A673 (cell line): ENCODE measurements at regions of chr13 and their contacts with region 1.

Region 1: DNA sequence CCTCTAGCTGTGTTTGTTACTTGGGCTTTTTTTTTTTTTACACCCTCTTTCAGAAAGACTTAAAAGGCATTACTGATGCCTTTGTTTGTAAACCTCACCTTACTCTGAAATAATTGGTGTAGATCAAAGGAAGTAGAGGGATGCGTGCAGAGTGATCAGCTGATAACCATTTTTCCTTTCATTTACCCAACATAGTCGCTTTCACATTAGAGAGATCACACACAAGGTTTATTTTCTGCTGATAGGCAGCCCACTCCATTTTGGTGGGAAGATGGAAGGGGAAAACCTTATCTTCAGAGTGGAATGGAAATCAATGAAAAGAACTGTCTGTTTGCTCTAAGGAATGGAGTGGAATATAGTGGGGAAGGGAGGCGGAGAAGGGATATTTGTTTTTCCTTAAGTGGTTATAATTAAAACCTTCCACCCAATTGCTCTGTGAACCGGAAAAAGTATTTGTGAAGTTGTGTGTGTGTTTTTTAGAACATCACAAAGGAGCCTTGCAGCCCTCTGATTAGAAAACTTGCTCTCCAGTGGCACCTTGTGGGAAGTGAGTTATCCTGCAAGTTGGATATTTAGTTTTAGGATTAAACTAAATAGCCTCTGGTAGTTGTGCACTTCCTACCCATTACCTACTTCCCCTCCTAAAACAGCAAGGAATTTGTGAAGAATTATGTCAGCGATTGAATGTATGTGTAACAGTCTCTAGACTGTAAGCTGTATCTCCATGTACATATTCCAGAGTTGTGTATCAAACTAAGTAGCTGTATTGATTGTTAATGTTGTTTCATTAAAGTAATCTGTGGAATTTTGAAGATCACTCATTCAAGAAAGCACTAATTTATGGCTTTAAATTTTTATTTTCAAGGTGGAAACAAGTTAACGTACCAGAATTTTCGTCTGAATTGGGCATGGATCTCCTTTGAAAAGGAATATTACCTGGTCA is 76.8 kb downstream of the FREM2 start:
- DNase-seq: peak; percentile 87
- H3K4me3 ChIP-seq: no peak overlapping the region
- H3K27ac ChIP-seq: no peak overlapping the region
- H3K4me1 ChIP-seq: peaks cover 4% of the 10 kb centered on the region
- H3K27me3 ChIP-seq: peaks cover 2% of the 10 kb centered on the region
- CTCF ChIP-seq: peak; percentile 92

Region 2: DNA sequence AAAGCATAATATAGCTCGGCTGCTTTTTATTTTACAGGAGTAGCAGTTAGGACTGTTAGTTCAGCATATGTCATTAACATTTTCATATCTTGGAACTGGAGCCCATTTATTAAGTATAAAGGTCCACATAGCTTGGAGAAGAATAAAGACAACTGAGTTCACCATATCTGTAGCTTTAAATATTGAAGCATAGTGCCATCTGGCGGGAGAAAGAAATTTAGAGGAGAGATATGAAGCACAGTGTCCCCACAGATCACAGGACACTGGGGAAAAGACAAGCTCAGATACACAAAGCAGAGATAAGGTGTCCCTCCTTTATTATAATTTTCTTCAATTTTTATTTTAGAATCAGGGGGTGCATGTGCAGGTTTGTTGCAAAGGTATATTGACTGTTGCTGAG is 181.6 kb before region 1 on chr13:
- CTCF ChIA-PET with region 1: no interaction called
- POLR2A ChIA-PET with region 1: no interaction called
- intact Hi-C with region 1: loop called (anchors 10 kb)
- DNase-seq: peak; percentile 82
- H3K4me3 ChIP-seq: no peak overlapping the region
- H3K27ac ChIP-seq: no peak overlapping the region
- H3K4me1 ChIP-seq: peaks cover 6% of the 10 kb centered on the region
- H3K27me3 ChIP-seq: no peaks in the 10 kb centered on the region
- CTCF ChIP-seq: peak; percentile 81

Region 3: DNA sequence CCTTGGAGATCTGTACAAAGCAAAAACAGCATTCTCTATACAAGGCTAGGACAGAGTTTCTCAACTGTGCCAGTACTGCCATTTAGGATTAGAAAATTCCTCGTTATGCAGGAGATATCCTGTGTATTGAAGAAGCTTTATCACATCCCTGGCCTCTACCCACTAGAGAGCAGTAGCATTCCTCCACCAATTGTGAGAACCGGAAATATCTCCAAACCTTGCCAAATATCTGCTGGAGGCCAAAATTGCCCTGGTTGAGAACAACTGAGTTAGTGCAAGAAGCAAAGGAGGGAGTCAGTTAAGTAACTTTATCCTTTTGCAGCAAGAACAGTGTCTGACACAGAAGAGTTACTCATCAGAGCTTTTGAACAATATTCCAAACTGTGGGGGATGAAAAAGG is 93.1 kb before region 1 on chr13:
- CTCF ChIA-PET with region 1: interaction called, 7 read pairs
- POLR2A ChIA-PET with region 1: no interaction called
- intact Hi-C with region 1: loop called (anchors 1 kb)
- DNase-seq: peak; percentile 97
- H3K4me3 ChIP-seq: no peak overlapping the region
- H3K27ac ChIP-seq: peak overlapping the region; percentile 61
- H3K4me1 ChIP-seq: peaks cover 59% of the 10 kb centered on the region
- H3K27me3 ChIP-seq: no peaks in the 10 kb centered on the region
- CTCF ChIP-seq: peak; percentile 87

Region 4: DNA sequence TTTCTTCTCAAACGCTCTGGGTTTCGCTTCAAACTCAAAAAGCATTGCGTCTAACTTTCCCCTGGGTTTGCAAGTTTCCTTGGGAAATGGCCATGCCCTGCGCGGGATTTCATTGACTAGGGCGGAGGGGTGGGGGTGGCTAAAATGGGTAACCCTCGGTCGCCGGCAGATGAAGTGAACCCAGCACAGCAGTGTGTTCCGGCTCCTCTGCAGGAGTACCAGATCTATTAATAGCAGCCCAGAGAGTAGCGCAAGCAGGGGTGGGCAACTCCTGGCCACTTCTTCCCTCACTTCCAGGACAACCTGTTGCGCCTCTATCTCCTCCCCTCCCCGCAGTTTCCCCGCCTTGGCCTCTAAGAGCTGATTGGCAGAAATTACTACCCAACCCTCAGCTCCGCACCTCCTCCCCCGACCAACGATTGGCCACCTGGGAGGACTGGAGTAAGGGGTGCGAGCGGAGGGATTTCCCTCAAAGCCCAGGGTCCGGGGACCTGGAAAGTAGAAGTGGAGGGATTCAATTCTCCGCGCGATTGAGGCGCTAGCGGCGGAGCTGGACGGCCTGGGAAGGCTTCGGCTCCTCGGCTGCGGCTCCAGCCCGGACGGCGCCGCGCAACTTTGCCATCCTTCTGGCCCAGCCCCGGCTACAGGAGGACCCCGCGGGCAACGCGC is 77.0 kb before region 1 on chr13 and contains the start of gene FREM2:
- CTCF ChIA-PET with region 1: interaction called, 11 read pairs
- POLR2A ChIA-PET with region 1: no interaction called
- intact Hi-C with region 1: loop called (anchors 1 kb)
- DNase-seq: peak; percentile 97
- H3K4me3 ChIP-seq: peak within 1 kb of the TSS; percentile 65
- H3K27ac ChIP-seq: no peak within 1 kb of the TSS
- H3K4me1 ChIP-seq: peaks cover 9% of the 10 kb centered on the region
- H3K27me3 ChIP-seq: no peaks in the 10 kb centered on the region
- CTCF ChIP-seq: no peak
- total RNA-seq, gene FREM2: 3.8 and 4.5 TPM in 2 replicates

Region 5: DNA sequence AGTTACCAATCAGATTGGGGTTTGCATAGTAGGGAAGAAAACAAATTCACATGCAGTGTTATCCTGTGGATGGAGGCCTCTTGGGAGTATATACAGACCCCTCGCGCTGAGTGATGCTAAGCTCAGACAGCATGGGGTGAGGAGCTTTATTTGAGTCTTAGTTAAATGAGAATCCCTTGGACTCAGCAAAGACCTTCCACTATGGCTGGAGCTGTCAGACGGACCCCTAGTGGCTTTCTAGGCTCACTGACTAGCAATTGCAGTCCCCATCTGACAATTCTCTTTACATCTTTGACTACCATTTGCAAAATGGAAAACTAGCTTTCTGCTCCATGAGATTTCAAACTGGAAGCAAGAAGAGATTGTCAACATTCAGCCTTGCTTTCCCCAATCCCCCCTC is 136.5 kb after region 1 on chr13:
- CTCF ChIA-PET with region 1: no interaction called
- POLR2A ChIA-PET with region 1: no interaction called
- intact Hi-C with region 1: no loop called
- DNase-seq: peak; percentile 54
- H3K4me3 ChIP-seq: no peak overlapping the region
- H3K27ac ChIP-seq: no peak overlapping the region
- H3K4me1 ChIP-seq: no peaks in the 10 kb centered on the region
- H3K27me3 ChIP-seq: no peaks in the 10 kb centered on the region
- CTCF ChIP-seq: peak; percentile 59

Region 6: GRCh38 chr13:38951525-38952313 is 188.0 kb after region 1 on chr13:
- CTCF ChIA-PET with region 1: no interaction called
- POLR2A ChIA-PET with region 1: no interaction called
- intact Hi-C with region 1: no loop called
- DNase-seq: no peak
- H3K4me3 ChIP-seq: no peak overlapping the region
- H3K27ac ChIP-seq: no peak overlapping the region
- H3K4me1 ChIP-seq: no peaks in the 10 kb centered on the region
- H3K27me3 ChIP-seq: no peaks in the 10 kb centered on the region
- CTCF ChIP-seq: no peak